ENCODE measurements at regions of chr12 and their contacts with region 1.

Region 1: GRCh38 chr12:11812586-11813427 is 163.3 kb downstream of the ETV6 start:
- DNase-seq: peak; percentile 70
- ATAC-seq: peak; percentile 82
- H3K4me3 ChIP-seq: peak overlapping the region; percentile 35 to 64 (median 52)
- H3K4me3 Mint-ChIP-seq: peak overlapping the region; percentile 35
- H3K27ac ChIP-seq: peak overlapping the region; percentile 54 to 80
- H3K27ac Mint-ChIP-seq: peak overlapping the region; percentile 78
- H3K4me1 ChIP-seq: peaks cover 34 to 37% of the 10 kb centered on the region in 2 donors
- H3K4me1 Mint-ChIP-seq: peaks cover 53% of the 10 kb centered on the region
- H3K27me3 ChIP-seq: no peaks in the 10 kb centered on the region
- H3K27me3 Mint-ChIP-seq: no peaks in the 10 kb centered on the region
- CTCF ChIP-seq: peak; percentile 36

Region 2: DNA sequence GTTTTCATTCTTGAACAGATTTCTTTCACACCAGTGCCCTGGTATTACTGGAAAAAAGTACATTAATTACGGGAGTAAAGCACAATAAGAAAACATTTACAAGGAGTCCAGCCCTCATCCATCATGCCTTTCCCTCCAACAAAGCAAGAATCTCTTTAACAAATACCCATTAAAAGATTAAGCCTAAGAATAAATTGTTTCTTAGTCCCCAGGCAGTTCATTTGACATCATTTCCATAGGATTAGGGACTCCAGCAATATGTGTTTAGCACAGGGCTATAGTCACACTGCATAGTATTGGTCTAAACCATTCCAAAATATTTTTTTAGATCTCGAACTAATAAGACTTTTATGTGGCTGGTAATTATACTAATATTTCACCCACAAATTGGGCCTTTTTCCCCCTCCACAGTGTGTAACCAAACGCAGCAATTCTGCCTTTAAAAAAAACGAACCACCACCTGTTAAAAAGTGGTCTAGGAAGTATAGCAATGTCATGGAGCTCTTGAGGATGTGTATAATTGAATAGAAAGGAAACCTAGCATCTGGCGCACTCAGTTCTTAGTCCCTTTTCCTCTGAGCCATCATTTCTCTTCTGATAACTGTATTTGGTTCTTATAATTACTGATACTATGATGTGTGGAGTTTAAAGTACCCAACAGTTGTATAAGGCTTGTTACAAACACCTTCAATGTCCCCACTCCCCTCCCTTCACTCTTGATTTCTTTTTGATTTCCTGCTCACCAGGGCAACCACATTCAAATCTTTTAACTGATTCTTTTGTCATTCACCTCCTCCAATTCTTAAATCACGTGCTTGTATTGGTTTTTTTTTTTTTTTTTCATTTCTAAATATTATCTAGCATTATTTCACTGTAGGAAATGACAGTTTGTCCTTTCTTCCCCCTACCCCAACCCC is 24.6 kb before region 1 on chr12:
- CTCF ChIA-PET with region 1: interaction called, 3 read pairs
- POLR2A ChIA-PET with region 1: no interaction called
- intact Hi-C with region 1: loop called (anchors 2 kb)
- DNase-seq: no peak
- ATAC-seq: no peak
- H3K4me3 ChIP-seq: no peak overlapping the region
- H3K4me3 Mint-ChIP-seq: no peak overlapping the region
- H3K27ac ChIP-seq: no peak overlapping the region
- H3K27ac Mint-ChIP-seq: no peak overlapping the region
- H3K4me1 ChIP-seq: peaks cover 0 to 6% of the 10 kb centered on the region in 2 donors
- H3K4me1 Mint-ChIP-seq: peaks cover 43% of the 10 kb centered on the region
- H3K27me3 ChIP-seq: no peaks in the 10 kb centered on the region
- H3K27me3 Mint-ChIP-seq: no peaks in the 10 kb centered on the region
- CTCF ChIP-seq: no peak

Region 3: DNA sequence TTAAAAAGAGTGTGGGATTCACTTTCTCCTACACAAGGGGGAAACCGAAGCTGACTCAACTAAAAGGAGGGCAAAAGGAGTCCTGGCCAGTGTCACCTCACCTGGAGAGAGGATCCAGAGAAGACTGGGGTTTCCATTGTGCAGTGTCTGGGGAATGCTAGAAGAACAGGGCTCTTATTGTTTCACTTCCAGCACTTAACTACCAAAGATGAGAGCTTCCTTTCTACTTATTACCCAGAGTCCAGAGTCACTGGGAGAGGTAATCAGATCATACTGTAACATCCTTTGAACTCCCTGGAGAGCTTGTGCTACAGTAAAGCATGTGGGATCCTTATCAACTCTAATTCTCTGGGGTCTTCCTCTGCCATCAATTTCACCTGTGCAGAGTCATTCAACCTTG is 109.6 kb after region 1 on chr12:
- CTCF ChIA-PET with region 1: no interaction called
- POLR2A ChIA-PET with region 1: no interaction called
- intact Hi-C with region 1: no loop called
- DNase-seq: no peak
- ATAC-seq: no peak
- H3K4me3 ChIP-seq: no peak overlapping the region
- H3K4me3 Mint-ChIP-seq: no peak overlapping the region
- H3K27ac ChIP-seq: no peak overlapping the region
- H3K27ac Mint-ChIP-seq: no peak overlapping the region
- H3K4me1 ChIP-seq: no peaks in the 10 kb centered on the region
- H3K4me1 Mint-ChIP-seq: no peaks in the 10 kb centered on the region
- H3K27me3 ChIP-seq: no peaks in the 10 kb centered on the region
- H3K27me3 Mint-ChIP-seq: peaks cover 18% of the 10 kb centered on the region
- CTCF ChIP-seq: no peak